CD4-positive, alpha-beta T cell (primary cell): ENCODE measurements at regions of chr6 and their contacts with region 1.

Region 1: GRCh38 chr6:37860226-37860839 is 40.8 kb downstream of the ZFAND3 start:
- DNase-seq: peak in 5 of 14 experiments; percentile 3 to 66 (median 51)
- ATAC-seq: no peak
- H3K4me3 ChIP-seq: no peak overlapping the region
- H3K4me3 Mint-ChIP-seq: no peak overlapping the region
- H3K27ac ChIP-seq: no peak overlapping the region
- H3K27ac Mint-ChIP-seq: no peak overlapping the region
- H3K4me1 ChIP-seq: peaks cover 14% of the 10 kb centered on the region
- H3K4me1 Mint-ChIP-seq: peaks cover 82% of the 10 kb centered on the region
- H3K27me3 ChIP-seq: no peaks in the 10 kb centered on the region
- H3K27me3 Mint-ChIP-seq: no peaks in the 10 kb centered on the region
- CTCF ChIP-seq: peak; percentile 71

Region 2: DNA sequence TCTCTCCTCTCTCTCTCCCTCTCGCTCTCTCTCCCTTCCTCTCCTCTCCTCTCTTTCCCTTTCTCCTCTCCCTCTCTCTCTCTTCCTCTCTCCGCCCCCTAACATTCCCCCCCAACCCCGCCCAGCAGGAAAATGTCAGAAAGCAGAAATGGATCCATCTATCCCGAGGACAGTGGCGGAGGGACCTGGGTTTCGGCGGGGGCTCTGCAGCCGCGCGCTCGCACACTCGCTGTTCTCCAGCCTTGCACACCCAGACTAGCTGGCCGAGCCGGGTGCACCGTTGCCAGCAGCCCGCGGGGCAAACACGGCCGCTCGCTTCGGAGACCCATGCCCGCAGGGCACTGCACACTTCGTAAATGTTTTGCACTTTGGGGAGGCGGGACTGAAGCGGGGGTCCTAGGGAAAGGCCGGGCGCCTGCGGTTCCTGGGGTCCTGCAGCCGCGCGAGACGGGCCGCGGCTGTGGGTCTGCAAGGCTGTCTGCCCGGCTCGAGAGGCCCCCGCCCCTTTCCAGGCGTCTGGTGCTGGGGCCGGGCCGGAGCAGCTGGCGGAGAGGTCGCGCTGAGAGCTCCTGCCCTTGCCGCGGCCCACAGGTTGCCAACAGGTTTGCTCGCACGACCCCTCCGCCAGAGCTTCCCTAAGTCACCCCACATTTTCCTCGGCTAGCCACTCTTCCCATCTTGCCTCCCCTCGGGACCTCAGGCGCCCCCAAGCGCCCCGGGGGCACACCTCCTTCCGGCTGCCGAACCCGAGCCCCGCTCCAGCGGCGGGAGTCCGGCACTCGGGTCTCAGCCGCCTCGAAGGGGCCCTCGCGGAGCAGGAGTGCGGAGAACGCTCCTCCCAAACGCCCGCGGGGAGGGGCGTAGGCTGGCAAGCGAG is 161.8 kb before region 1 on chr6:
- CTCF ChIA-PET with region 1: no interaction called
- POLR2A ChIA-PET with region 1: no interaction called
- intact Hi-C with region 1: loop called (anchors 5 to 10 kb)
- DNase-seq: peak in 12 of 14 experiments; percentile 33 to 83 (median 56)
- ATAC-seq: peak; percentile 13
- H3K4me3 ChIP-seq: peak overlapping the region; percentile 78
- H3K4me3 Mint-ChIP-seq: peak overlapping the region; percentile 94
- H3K27ac ChIP-seq: no peak overlapping the region
- H3K27ac Mint-ChIP-seq: peak overlapping the region; percentile 74
- H3K4me1 ChIP-seq: peaks cover 39% of the 10 kb centered on the region
- H3K4me1 Mint-ChIP-seq: peaks cover 27% of the 10 kb centered on the region
- H3K27me3 ChIP-seq: peaks cover 16 to 28% of the 10 kb centered on the region in 2 experiments
- H3K27me3 Mint-ChIP-seq: peaks cover 73% of the 10 kb centered on the region
- CTCF ChIP-seq: no peak